Panc1 (cell line): ENCODE measurements at regions of chr15 and their contacts with region 1.

Region 1: GRCh38 chr15:64825431-64826294 is at the start of gene PIF1:
- DNase-seq: peak; percentile 96
- ATAC-seq: peak; percentile 96
- H3K4me3 ChIP-seq: peak within 1 kb of the TSS; percentile 63 to 94
- H3K27ac ChIP-seq: peak within 1 kb of the TSS; percentile 99
- H3K4me1 ChIP-seq: peaks cover 6% of the 10 kb centered on the region; the same call in 1 of the 2 replicates
- H3K27me3 ChIP-seq: no peaks in the 10 kb centered on the region
- CTCF ChIP-seq: no peak
- total RNA-seq, gene PIF1: 38.6 TPM

Region 2: GRCh38 chr15:64412216-64412615 is 413.4 kb before region 1 on chr15:
- CTCF ChIA-PET with region 1: no interaction called
- POLR2A ChIA-PET with region 1: no interaction called
- in situ Hi-C with region 1: no loop called
- intact Hi-C with region 1: no loop called
- DNase-seq: no peak
- ATAC-seq: no peak
- H3K4me3 ChIP-seq: no peak overlapping the region
- H3K27ac ChIP-seq: no peak overlapping the region
- H3K4me1 ChIP-seq: no peaks in the 10 kb centered on the region
- H3K27me3 ChIP-seq: no peaks in the 10 kb centered on the region
- CTCF ChIP-seq: no peak

Region 3: DNA sequence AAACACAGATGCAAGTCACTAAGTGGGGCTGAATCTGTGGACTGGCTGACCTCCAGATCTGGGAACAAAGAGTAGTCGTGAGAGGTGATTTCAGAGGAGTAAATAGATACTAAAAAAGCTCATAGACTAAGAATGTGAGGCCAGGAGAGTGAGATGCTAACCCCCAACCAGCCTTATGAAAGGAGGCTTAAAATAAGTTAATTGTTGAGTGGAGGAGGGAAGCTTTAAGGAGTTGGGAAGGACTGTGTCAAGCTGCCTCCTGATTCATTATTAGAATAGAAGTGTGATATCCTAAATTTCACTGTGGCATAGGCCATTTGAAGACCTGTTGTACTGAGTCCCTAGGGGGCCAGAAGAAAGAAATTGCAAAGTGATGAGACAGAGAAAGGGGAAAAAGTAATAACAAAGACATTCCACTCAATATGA is 157.9 kb before region 1 on chr15:
- CTCF ChIA-PET with region 1: no interaction called
- POLR2A ChIA-PET with region 1: no interaction called
- in situ Hi-C with region 1: no loop called
- intact Hi-C with region 1: no loop called
- DNase-seq: no peak
- ATAC-seq: no peak
- H3K4me3 ChIP-seq: no peak overlapping the region
- H3K27ac ChIP-seq: no peak overlapping the region
- H3K4me1 ChIP-seq: no peaks in the 10 kb centered on the region
- H3K27me3 ChIP-seq: no peaks in the 10 kb centered on the region
- CTCF ChIP-seq: no peak

Region 4: DNA sequence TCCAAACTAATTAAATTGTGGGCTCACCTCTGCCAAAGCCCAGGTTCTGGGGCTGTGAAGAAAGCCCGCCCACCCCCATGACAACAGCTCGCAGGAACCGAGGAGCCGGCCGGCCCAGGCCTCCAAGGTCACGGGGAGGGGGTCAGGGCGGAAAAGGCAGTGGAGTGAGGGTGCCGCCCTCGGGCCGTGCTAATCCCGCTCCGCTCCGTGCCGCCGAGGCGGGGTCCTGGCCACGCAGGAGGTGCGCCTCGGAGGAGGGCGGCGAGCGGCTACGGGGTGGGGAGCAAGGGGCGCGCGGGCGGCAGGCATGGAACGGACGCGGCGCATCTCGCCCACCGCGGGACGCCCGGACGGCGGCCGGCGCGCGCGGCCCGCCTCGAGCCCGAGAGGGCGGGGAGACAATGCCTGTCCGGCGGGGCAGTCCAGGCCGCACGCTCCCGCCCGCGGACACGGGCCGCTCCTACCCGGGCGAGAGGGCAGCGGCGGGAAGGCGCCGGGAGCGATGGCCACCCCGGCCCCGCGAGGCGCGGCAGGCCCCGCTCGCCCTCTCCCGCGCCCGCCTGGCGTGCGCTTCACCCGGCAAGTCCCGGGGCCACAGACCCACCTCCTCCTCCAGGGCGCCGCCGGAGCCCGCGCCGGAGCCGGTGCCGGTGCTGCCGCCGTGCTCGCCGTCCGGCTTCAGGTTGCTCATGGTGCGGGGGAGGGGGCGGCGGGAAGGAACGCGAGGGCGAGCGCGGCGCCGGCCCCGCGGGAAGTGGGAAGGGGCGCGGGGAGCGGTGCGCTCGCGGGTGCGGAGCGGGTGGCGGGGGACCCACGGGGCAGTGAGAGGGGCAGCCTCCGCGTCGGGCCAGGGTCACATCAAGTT is 50.8 kb before region 1 on chr15:
- CTCF ChIA-PET with region 1: no interaction called
- POLR2A ChIA-PET with region 1: interaction called, 13 read pairs
- in situ Hi-C with region 1: no loop called
- intact Hi-C with region 1: no loop called
- DNase-seq: no peak
- ATAC-seq: peak; percentile 65
- H3K4me3 ChIP-seq: peak overlapping the region; percentile 40 to 69
- H3K27ac ChIP-seq: peak overlapping the region; percentile 74
- H3K4me1 ChIP-seq: peaks cover 15% of the 10 kb centered on the region
- H3K27me3 ChIP-seq: no peaks in the 10 kb centered on the region
- CTCF ChIP-seq: no peak

Region 5: GRCh38 chr15:64950888-64951287 is 125.2 kb after region 1 on chr15:
- CTCF ChIA-PET with region 1: no interaction called
- POLR2A ChIA-PET with region 1: no interaction called
- in situ Hi-C with region 1: no loop called
- intact Hi-C with region 1: no loop called
- DNase-seq: no peak
- ATAC-seq: peak; percentile 54
- H3K4me3 ChIP-seq: no peak overlapping the region
- H3K27ac ChIP-seq: no peak overlapping the region
- H3K4me1 ChIP-seq: no peaks in the 10 kb centered on the region
- H3K27me3 ChIP-seq: no peaks in the 10 kb centered on the region
- CTCF ChIP-seq: no peak